ENCODE measurements at regions of chr19 and their contacts with region 1.

Region 1: DNA sequence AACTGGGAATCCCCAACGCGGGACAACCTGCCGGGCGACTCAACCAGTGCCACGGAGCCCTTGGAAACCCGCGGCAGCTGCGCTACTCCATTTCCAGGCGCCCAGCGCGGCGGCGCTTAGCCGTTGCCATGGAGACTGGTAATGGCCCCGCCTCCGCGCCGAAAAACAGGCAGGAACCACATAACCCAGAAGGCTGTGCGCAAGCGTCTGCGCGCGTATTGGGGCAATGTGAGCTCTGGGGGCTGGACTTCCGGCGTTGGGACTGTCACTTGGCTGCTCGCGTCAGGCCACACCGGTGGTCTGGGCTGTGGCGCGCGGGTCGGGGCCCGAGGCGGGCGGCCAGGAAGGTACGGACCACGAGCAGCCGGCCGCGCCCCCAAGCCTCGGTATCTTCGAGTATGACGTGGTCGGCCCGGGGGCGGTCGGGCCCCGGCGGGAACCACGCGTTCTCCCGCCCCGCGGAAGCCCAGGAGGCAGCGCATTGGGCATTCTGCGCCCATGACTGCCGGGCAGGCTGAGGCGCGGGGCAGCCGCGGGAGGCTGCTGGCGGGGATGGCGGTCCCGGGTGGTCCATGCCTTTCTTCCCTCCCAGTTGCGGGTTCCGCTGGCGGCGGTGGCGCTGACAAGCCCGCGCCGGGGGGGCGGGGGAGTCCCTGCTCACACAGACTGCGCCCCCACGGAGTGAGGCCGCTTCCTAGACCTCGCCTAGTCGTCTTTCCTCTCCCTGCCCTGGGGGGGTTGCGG is at the start of gene ZNF324B:
- DNase-seq: peak; percentile 95
- H3K4me3 Mint-ChIP-seq: peak within 1 kb of the TSS; percentile 75
- H3K27ac Mint-ChIP-seq: no peak within 1 kb of the TSS
- H3K4me1 Mint-ChIP-seq: peaks cover 19% of the 10 kb centered on the region
- H3K27me3 Mint-ChIP-seq: peaks cover 3% of the 10 kb centered on the region
- total RNA-seq, gene ZNF324B: 9.6 and 11.3 TPM in 2 replicates

Region 2: DNA sequence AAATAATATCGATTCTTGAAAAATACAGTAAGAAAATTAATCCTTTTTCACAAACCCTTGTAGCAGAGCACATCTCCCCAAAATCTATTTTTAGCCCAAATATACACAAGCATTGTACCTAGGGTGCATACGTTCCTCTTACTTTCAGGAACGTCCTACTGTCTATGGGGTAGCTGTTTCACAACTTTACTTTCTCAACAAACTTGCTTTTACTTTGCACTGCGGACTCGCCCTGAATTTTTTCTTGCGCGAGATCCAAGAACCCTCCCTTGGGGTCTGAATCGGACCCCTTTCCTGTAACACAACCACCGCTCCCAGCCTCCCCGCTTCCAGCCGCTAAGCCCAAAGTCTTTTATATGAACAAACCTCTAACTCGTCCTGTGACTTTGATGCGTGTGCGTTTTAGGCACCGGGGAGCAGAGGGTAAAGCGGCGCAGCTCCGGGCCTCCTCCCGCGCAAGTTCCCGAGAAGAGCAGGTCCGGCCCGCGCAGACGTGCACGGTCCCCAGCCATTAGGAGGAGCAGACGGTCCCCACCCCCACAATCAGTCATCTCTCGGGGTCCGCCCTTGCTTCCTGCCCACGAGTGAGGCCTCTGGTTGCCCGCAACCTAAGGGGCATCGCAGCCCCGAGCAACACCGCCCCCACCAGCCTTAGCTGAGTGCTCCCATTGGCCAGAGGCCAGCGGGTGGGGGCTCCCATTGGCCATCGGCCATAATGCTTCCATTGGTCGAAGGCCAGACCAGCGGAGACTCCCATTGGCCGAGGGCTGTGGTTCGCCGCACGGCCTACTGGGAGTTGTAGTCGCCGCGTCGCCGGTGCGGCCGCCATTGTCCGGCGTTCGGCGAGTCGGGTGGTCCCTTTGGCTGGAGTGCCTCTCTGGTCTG is 173.1 kb before region 1 on chr19 and contains the start of gene ZNF8:
- intact Hi-C with region 1: loop called (anchors 2 kb)
- DNase-seq: peak; percentile 96
- H3K4me3 Mint-ChIP-seq: peak within 1 kb of the TSS; percentile 94
- H3K27ac Mint-ChIP-seq: peak within 1 kb of the TSS; percentile 94
- H3K4me1 Mint-ChIP-seq: peaks cover 21% of the 10 kb centered on the region
- H3K27me3 Mint-ChIP-seq: no peaks in the 10 kb centered on the region
- total RNA-seq, gene ZNF8: 4.7 and 5.3 TPM in 2 replicates

Region 3: GRCh38 chr19:58386576-58387337 is 64.8 kb before region 1 on chr19 and contains the start of gene RPS5:
- intact Hi-C with region 1: loop called (anchors 1 kb)
- DNase-seq: peak; percentile 96
- H3K4me3 Mint-ChIP-seq: peak within 1 kb of the TSS; percentile 96
- H3K27ac Mint-ChIP-seq: peak within 1 kb of the TSS; percentile 94
- H3K4me1 Mint-ChIP-seq: peaks cover 29% of the 10 kb centered on the region
- H3K27me3 Mint-ChIP-seq: no peaks in the 10 kb centered on the region
- total RNA-seq, gene RPS5: 1,217 and 1,244 TPM in 2 replicates

Region 4: DNA sequence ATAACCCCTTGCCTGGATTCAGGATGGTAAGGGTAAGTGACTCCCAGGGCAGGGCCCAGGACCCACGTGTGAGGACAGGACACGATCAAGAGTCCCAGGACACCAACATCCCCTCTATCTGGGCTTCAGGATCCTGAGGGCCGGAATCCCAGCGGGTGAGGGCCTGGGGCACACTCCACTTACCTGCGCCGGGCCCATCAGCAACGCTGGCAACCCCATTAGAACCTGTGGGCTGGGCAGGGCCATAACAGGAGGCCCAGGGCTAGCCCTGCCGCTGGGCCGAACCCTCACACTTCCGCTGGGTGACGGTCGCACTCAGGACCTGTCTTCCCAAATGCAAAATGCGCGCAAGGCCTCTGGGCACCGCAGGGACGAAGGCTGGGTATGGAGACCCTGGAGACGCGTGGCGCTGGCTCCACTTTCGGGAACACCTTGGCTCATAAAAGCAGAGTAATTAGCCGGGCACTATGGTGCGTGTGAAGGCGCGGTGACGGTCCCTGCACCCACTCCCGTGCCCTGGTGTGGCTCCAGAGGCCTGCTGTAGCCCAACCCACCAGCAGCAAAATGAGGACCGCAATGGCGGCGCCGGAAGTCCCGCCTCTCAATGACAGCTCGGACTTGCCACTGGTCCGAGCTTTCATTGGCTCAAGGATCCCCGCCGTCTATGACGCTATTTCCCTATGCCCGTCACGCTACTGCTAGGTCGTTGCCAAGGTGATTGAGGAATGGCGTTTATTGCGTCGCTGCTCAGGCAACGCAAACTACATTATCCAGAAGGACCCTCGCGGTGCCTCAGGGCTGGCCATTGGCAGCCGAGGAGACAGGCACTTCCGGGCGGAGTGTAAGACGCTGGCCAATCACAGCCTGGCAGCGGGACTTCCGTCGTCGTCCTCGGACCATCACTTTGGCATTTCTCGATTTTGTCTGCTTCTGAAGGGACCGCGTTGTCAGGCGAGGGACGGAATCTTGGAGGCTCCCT is 11.7 kb before region 1 on chr19 and contains the start of gene ZNF132:
- intact Hi-C with region 1: loop called (anchors 1 kb)
- DNase-seq: peak; percentile 94
- H3K4me3 Mint-ChIP-seq: peak within 1 kb of the TSS; percentile 85
- H3K27ac Mint-ChIP-seq: peak within 1 kb of the TSS; percentile 80
- H3K4me1 Mint-ChIP-seq: peaks cover 18% of the 10 kb centered on the region
- H3K27me3 Mint-ChIP-seq: no peaks in the 10 kb centered on the region
- total RNA-seq, gene ZNF132: 3.2 and 3.4 TPM in 2 replicates

Region 5: GRCh38 chr19:58466760-58467589 is 15.4 kb after region 1 on chr19 and contains the start of gene ZNF324:
- intact Hi-C with region 1: loop called (anchors 2 kb)
- DNase-seq: peak; percentile 96
- H3K4me3 Mint-ChIP-seq: peak within 1 kb of the TSS; percentile 80
- H3K27ac Mint-ChIP-seq: peak within 1 kb of the TSS; percentile 68
- H3K4me1 Mint-ChIP-seq: peaks cover 13% of the 10 kb centered on the region
- H3K27me3 Mint-ChIP-seq: no peaks in the 10 kb centered on the region
- total RNA-seq, gene ZNF324: 11.6 and 12.3 TPM in 2 replicates

Region 6: DNA sequence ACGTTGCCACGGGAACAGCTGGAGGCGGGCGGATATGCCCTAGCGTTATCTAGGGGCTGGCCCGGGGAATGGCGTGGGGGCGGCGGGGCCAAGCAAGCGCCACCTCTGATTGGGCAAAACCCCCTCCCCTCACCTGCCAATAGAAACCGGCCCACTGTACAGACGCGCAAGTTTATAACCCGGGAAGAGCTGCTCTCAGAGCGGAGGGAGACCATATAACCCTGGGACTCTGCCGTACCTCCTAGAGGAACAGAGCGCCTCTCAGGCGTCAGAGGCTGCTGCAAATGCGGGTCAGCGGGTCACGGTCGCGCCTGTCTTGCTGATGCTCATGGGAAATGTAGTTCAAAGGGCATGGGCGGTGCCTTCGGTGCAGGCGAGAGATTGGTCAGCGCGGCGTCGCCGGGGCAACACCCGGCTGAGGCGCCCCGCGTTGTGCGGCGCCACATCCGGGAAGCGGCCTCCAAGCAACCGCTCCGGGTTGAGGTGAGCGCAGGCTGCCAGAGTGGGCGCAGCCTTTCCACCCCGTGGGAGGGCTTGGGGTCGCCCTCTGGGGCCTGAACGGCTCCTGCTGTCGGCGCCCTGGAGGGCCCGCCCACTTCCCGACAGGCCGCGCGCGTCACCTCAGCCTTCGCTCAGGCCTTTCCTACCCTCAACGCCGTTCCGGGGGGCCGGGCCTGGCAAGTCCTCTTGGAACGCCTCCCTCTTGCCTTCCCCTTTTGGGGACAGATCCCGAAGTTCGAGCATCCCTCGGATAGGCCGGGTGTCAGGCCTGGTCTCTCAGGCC is 24.4 kb after region 1 on chr19 and contains the start of gene ZNF446:
- intact Hi-C with region 1: loop called (anchors 2 kb)
- DNase-seq: peak; percentile 97
- H3K4me3 Mint-ChIP-seq: peak within 1 kb of the TSS; percentile 88
- H3K27ac Mint-ChIP-seq: peak within 1 kb of the TSS; percentile 99
- H3K4me1 Mint-ChIP-seq: peaks cover 18% of the 10 kb centered on the region
- H3K27me3 Mint-ChIP-seq: no peaks in the 10 kb centered on the region
- total RNA-seq, gene ZNF446: 6.6 and 6.9 TPM in 2 replicates

Region 7: DNA sequence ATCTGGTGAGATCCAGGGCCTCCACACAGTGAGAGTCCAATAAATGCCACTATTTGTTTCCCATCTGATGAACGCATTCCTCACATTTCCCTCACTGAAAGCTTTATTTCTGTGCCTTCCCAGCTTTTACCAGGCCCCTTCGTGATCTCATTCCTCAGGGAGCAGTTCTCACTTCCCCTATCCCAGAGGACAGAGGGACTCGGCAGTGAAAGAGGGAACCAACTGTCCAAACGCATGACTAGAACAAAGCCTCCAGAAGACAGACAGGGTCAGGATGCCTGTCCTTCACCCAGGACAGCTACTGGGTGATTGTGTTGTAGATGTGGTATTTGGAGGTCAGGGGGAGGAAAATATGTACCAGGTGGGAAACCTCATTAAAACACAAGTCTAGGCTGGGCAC is 70.1 kb after region 1 on chr19:
- intact Hi-C with region 1: no loop called
- DNase-seq: no peak
- H3K4me3 Mint-ChIP-seq: peak overlapping the region; percentile 59
- H3K27ac Mint-ChIP-seq: no peak overlapping the region
- H3K4me1 Mint-ChIP-seq: peaks cover 18% of the 10 kb centered on the region
- H3K27me3 Mint-ChIP-seq: no peaks in the 10 kb centered on the region

Measured in activated T-helper 2 cell treated with anti-CD3 and anti-CD28 coated beads, Interferon-gamma antibody, Interleukin-2, Interleukin-4, amounts not matched to agents 10 μg/mL and 5 μg/mL and 100 μg/mL, durations not matched to agents 14 hours and 24 hours and 36 hours (primary cell).